Posterior vena cava (tissue), 2 donors: ENCODE measurements at regions of chr14 and their contacts with region 1.

Region 1: DNA sequence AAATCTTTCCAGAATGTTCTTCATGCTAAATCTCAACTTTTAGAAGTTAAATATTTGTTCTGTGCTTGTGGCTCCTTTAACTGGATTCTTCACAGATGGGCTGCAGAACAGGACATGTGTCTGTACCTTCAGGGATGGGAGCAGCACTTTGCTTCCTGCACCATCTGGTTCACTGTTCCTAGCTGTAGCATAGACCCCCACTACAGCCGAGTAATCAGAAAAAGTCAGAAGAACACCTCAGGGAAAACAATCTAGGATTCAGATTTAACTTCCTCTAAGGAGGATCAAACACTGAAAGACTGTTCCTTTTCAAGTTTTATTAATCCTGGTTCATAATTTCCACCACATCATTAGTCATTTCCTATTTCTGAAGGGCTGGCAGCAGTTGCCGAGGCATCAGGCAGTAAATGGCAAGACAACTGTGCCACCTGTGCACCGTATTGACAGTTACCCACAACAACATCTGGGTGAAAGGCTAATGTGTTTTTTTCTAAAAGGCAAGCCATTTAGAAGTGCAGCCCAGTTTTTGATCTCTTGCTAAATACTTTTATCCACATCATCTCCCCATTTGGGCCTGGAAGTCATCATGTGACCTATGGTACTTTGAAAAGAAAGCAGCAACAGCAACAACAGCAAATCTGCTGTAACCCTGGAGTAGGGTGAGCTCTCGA is 212.8 kb upstream of the BMP4 start:
- DNase-seq: no peak

Region 2: DNA sequence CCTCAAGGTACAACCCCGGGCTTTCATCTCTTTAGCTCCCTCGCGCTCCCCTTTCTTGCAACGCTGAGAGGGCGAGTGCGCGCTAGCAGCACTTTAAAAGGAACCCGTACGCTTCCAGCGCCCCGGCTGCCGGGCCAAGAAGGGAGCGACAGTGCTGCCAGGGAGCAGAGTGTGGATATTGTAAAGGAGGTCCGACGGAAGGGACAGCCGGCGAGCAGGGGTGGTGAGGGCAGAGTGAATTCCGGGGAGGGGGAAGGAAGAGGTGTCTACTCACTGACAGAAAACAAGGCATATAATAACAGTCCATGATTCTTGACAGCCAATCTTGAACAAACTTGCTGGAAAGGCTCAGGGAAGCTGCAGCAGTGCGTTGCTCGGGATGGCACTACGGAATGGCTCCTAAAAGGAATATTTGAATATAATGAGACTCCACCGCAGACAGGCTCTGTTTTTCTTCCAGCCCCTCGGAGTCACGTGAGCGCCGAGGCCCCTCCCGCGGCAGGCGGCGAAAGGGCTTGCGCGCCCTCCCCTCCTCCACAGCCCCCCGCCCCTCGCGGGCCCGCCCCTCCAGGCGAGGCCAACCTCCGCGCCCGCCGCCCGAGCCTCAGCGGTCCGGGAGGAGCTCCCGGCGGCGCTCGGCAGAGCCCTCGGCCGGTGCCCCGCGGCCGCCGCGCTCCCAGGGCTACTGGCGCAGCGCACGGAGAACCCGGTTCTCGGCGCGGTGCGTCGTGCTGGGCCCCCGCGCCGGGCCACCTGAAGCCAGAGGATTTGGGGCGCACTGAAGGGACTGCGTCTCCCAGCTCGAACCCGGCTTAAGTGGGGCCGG is 216.2 kb before region 1 on chr14:
- intact Hi-C with region 1: loop called in 1 of 2 experiments (anchors 10 kb)
- DNase-seq: peak; percentile 95